Dendritic cell treated with granulocyte-macrophage colony-stimulating factor and Interleukin-4, amounts not matched to agents 40 ng/mL and 50 ng/mL, for 4 days (primary cell): ENCODE measurements at regions of chr14 and their contacts with region 1.

Region 1: GRCh38 chr14:52325126-52325525 is 11.0 kb downstream of the PTGER2 start:
- H3K4me3 Mint-ChIP-seq: peak overlapping the region; percentile 54
- H3K27ac Mint-ChIP-seq: peak overlapping the region; percentile 84
- H3K4me1 Mint-ChIP-seq: peaks cover 37% of the 10 kb centered on the region
- H3K27me3 Mint-ChIP-seq: no peaks in the 10 kb centered on the region

Region 2: DNA sequence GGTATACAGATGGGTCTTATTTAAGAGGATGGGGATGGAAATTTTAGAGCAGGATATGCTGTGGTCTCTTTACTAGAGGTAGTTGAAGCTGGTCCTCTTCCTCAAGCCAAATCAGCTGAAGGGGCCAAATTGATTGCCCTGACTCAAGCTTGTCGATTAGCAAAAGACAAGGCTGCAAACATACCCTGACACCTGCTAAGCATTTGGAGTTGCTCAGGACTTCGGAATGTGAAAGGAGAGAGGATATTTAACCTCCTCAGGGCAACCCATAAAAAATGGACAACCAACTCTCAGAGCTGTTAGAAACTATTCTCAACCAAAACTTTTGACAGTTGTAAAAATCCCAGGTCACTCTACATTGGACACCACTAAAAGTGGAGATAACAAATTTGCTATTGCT is 42.0 kb before region 1 on chr14:
- intact Hi-C with region 1: no loop called
- H3K4me3 Mint-ChIP-seq: no peak overlapping the region
- H3K27ac Mint-ChIP-seq: no peak overlapping the region
- H3K4me1 Mint-ChIP-seq: peaks cover 36% of the 10 kb centered on the region
- H3K27me3 Mint-ChIP-seq: peaks cover 2% of the 10 kb centered on the region

Region 3: GRCh38 chr14:52296378-52296777 is 28.7 kb before region 1 on chr14:
- intact Hi-C with region 1: no loop called
- H3K4me3 Mint-ChIP-seq: no peak overlapping the region
- H3K27ac Mint-ChIP-seq: no peak overlapping the region
- H3K4me1 Mint-ChIP-seq: peaks cover 10% of the 10 kb centered on the region
- H3K27me3 Mint-ChIP-seq: peaks cover 6% of the 10 kb centered on the region

Region 4: DNA sequence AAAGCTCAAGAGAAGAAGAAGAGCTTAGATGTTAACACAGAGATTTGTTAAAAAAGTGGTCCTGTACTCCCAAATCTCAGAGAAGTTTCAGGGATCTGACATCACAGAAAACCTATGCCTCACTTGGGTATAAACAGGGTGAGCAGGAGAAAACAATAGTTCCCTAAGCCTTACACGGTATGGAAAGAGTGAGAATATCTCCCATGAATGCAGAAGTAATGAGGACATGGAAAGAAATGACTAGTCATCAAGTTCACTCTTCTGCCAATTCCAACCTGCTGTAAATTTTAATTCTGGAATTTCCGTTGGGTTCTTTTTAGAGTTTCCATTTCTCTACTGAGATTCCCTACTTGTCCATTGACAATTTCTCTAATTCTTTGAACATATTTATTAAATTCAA is 17.2 kb before region 1 on chr14:
- intact Hi-C with region 1: loop called (anchors 2 kb)
- H3K4me3 Mint-ChIP-seq: no peak overlapping the region
- H3K27ac Mint-ChIP-seq: peak overlapping the region; percentile 39
- H3K4me1 Mint-ChIP-seq: peaks cover 47% of the 10 kb centered on the region
- H3K27me3 Mint-ChIP-seq: peaks cover 27% of the 10 kb centered on the region

Region 5: GRCh38 chr14:52313903-52314594 is 11.1 kb before region 1 on chr14 and contains the start of gene PTGER2:
- intact Hi-C with region 1: loop called (anchors 1 kb)
- H3K4me3 Mint-ChIP-seq: peak within 1 kb of the TSS; percentile 99
- H3K27ac Mint-ChIP-seq: peak within 1 kb of the TSS; percentile 98
- H3K4me1 Mint-ChIP-seq: peaks cover 75% of the 10 kb centered on the region
- H3K27me3 Mint-ChIP-seq: peaks cover 11% of the 10 kb centered on the region

Region 6: GRCh38 chr14:52369305-52369801 is 44.2 kb after region 1 on chr14:
- intact Hi-C with region 1: no loop called
- H3K4me3 Mint-ChIP-seq: no peak overlapping the region
- H3K27ac Mint-ChIP-seq: no peak overlapping the region
- H3K4me1 Mint-ChIP-seq: peaks cover 6% of the 10 kb centered on the region
- H3K27me3 Mint-ChIP-seq: peaks cover 26% of the 10 kb centered on the region